Activated T-helper 1 cell treated with anti-CD3 and anti-CD28 coated beads, Interleukin-12 subunit alpha, Interleukin-12 subunit beta, Interleukin-2, Interleukin-4 antibody, amounts not matched to agents 30 ng/mL and 10 ng/mL and 1 ng/mL, durations not matched to agents 14 hours and 24 hours and 36 hours (primary cell): ENCODE measurements at regions of chr2 and their contacts with region 1.

Region 1: GRCh38 chr2:54522624-54523281 is 66.6 kb downstream of the SPTBN1 start:
- DNase-seq: peak; percentile 49
- H3K4me3 Mint-ChIP-seq: no peak overlapping the region
- H3K27ac Mint-ChIP-seq: no peak overlapping the region
- H3K4me1 Mint-ChIP-seq: peaks cover 26% of the 10 kb centered on the region
- H3K27me3 Mint-ChIP-seq: peaks cover 24% of the 10 kb centered on the region

Region 2: DNA sequence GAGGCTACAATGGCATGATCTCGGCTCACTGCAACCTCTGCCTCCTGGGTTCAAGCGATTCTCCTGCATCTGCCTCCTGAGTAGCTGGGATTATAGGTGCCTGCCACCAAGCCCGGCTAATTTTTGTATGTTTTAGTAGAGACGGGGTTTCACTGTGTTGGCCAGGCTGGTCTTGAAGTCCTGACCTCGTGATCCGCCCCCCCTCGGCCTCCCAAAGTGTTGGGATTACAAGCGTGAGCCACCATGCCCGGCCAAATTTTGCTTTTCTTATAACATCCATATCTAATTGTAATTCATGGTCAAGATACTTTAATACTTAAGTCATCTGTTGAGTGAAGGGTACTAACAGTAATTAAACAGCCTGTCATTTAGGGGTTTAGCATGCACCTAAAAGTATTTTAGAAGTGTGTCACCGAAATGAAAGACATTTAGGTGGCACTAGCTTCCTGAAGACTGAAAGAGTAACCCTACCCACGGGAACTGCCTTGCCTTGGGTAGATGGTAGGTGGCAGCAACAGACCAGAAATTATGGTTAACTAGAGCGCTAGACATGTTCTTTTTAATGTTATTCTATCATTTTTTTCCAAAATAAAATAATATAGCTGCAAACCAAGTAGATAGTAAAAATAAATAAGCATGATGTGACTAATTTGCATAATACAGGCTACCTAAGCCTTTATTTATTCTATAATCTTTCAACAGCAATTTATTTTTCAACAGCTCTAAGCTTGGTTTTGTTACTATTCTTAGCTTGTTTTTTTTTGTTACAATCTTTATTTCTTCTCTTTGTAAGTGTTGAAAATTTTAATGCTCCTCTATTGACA is 415.9 kb before region 1 on chr2:
- intact Hi-C with region 1: loop called (anchors 1 kb)
- DNase-seq: peak; percentile 11
- H3K4me3 Mint-ChIP-seq: no peak overlapping the region
- H3K27ac Mint-ChIP-seq: no peak overlapping the region
- H3K4me1 Mint-ChIP-seq: peaks cover 6% of the 10 kb centered on the region
- H3K27me3 Mint-ChIP-seq: peaks cover 8% of the 10 kb centered on the region

Region 3: DNA sequence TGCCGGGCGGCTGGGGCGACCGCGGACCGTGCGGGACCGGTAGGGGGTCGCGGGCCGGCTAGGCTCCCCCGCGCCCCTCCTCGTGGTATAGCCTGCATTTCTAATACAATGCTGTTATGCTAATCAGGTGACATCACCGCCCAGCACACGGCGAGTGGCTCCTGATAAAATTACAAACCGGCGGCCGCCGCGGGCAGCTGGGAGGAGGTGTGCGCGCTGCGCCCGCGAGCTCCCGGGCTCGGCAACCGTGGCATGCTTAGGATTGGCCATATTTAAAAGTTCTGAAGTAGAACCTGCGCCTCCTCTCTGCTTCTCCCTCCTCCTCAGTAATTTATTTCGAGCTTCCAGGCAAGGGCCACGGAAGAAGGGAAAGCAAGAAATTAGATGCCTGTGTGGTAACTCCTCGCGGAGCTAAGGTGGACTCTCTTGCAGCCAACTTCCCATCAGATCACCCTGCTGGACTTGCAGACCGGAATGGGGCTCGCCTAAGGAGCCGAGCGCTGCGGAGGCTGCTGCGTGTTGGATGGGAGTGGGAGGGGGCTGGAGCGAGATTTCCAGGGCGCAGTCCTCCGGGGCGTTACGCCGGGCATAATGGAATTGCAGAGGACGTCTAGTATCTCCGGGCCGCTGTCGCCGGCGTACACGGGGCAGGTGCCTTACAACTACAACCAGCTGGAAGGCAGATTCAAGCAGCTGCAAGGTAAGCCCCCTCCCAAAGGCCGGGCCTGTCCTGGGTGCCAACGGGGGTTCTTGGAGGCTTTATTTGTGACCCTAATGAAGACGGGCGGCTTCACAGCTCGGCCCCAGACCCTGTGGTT is 35.6 kb after region 1 on chr2:
- intact Hi-C with region 1: loop called (anchors 1 kb)
- DNase-seq: peak; percentile 64
- H3K4me3 Mint-ChIP-seq: peak overlapping the region; percentile 90
- H3K27ac Mint-ChIP-seq: peak overlapping the region; percentile 88
- H3K4me1 Mint-ChIP-seq: peaks cover 89% of the 10 kb centered on the region
- H3K27me3 Mint-ChIP-seq: peaks cover 3% of the 10 kb centered on the region

Region 4: GRCh38 chr2:54657664-54658083 is 134.9 kb after region 1 on chr2:
- intact Hi-C with region 1: loop called (anchors 1 kb)
- DNase-seq: no peak
- H3K4me3 Mint-ChIP-seq: no peak overlapping the region
- H3K27ac Mint-ChIP-seq: no peak overlapping the region
- H3K4me1 Mint-ChIP-seq: peaks cover 20% of the 10 kb centered on the region
- H3K27me3 Mint-ChIP-seq: no peaks in the 10 kb centered on the region

Region 5: GRCh38 chr2:54838585-54839035 is 315.9 kb after region 1 on chr2:
- intact Hi-C with region 1: loop called (anchors 1 kb)
- DNase-seq: peak; percentile 28
- H3K4me3 Mint-ChIP-seq: no peak overlapping the region
- H3K27ac Mint-ChIP-seq: no peak overlapping the region
- H3K4me1 Mint-ChIP-seq: no peaks in the 10 kb centered on the region
- H3K27me3 Mint-ChIP-seq: no peaks in the 10 kb centered on the region